ENCODE measurements at regions of chr3 and their contacts with region 1.

Region 1: DNA sequence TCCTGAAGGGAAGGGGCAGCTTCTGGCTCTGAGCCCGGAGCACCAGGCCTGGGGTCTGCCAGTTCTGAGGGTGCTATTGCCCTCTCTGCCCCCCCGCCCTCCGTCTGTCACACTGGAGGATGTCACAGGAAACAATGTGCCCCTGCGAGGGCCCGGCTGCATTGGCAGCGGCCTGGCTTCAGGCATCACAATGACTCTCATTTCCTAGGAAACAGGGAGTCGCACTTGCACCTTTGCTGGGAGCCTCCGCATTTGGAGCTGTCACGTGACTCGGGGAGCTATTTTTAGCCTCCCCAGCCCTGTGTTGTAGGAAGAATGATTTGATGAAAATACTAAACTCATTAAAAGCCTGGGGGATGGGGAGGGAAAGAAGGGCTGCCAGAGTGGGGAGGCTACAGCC is 518.9 kb downstream of the SHQ1 start:
- DNase-seq: peak; percentile 50 to 88 (median 73)
- H3K4me3 ChIP-seq: no peak overlapping the region
- H3K27ac ChIP-seq: peak overlapping the region in 41 of 59 donors; percentile 1 to 81 (median 59)
- H3K27me3 ChIP-seq: no peaks in the 10 kb centered on the region
- CTCF ChIP-seq: no peak

Region 2: DNA sequence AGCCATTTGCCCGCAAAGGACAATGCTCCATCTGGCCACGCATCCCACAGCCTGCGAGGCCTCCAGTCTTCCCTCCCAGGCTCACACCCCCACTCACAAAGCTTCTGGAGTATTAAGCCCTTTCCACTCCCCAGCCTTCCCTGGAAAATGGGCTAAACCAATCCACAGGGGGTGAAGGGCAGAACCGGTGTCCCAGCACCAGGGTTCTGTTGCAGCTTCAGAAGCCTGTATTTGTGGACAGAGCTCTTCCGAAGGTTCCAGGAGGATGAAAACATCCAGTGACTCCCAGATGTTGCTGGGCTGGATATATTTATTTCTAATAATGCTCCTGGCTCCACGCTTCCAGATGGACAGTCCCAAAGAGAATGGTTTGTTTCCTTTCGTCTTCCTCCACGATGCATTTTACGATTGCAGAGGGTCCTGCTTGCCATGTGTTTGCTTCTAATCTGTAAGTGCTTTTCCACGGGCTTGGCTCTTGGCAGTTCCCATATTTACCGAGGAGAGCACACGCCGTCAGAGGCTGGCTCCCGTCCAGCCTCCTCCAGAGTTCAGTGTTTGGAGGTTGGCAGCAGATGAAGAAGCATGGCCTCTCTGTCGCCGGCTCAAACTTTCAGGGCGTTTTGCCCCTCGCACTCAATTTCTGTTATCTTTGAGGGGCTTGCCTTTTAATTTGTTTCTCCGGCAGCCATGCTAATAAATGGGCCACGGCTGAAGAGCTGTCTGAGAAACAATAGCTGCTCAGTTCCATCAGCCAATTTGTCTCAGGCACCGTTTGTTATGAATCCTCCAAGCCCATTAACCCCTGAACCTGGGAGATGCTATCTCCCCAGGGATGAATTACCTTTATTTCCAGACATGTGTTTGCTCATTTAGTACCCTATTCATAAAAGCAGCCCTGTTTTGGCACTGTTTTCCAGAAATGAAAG is 176.5 kb before region 1 on chr3:
- intact Hi-C with region 1: loop called in 1 of 2 experiments (anchors 5 kb)
- DNase-seq: peak; percentile 41 to 73 (median 58)
- H3K4me3 ChIP-seq: peak overlapping the region; percentile 0 to 70 (median 48)
- H3K27ac ChIP-seq: peak overlapping the region; percentile 73 to 98 (median 94)
- H3K27me3 ChIP-seq: no peaks in the 10 kb centered on the region
- CTCF ChIP-seq: peak in 3 of 56 donors; percentile 9 to 22 (median 18)

Region 3: GRCh38 chr3:72288955-72289691 is 40.2 kb before region 1 on chr3:
- intact Hi-C with region 1: loop called in 1 of 2 experiments (anchors 5 kb)
- DNase-seq: peak; percentile 16 to 82 (median 76)
- H3K4me3 ChIP-seq: peak overlapping the region in 58 of 59 donors; percentile 7 to 62 (median 42)
- H3K27ac ChIP-seq: peak overlapping the region in 58 of 59 donors; percentile 18 to 94 (median 82)
- H3K27me3 ChIP-seq: peaks cover 0 to 3% (median 0%) of the 10 kb centered on the region in 45 donors
- CTCF ChIP-seq: peak in 1 of 56 donors; percentile 29